Activated T-helper 2 cell treated with anti-CD3 and anti-CD28 coated beads, Interferon-gamma antibody, Interleukin-2, Interleukin-4, amounts not matched to agents 10 μg/mL and 5 μg/mL and 100 μg/mL, durations not matched to agents 14 hours and 24 hours and 36 hours (primary cell): ENCODE measurements at regions of chr17 and their contacts with region 1.

Region 1: DNA sequence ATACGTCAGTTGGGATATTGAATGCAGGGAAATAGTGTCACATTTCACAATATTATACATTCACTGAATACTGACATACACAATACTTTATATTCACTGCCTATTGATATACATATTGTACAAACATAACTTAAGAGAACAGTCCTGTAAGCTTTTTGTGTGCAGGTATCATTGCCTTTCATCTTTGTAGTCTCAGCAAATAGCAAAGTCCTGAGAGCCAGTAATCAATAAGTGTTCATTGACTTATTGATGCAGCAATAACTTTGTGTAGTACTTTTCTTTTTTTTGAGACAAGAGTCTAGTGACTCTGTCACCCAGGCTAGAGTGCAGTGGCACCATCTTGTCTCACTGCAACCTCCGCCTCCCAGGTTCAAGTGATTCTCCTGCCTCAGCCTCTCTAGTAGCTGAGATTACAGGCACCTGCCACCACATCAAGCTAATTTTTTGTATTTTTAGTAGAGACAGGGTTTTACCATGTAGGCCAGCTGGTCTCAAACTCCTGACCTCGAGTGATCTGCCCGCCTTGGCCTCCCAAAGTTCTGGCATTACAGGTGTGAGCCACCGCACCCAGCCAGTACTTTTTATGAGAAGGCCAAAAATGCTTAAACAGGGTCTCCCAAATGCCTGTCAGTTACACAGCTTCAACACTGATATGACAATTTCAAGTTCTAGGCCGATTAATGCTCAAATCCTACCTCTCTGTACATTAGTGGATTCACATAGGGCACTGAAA is 5.4 kb upstream of the NUP85 start:
- DNase-seq: no peak
- H3K4me3 Mint-ChIP-seq: no peak overlapping the region
- H3K27ac Mint-ChIP-seq: no peak overlapping the region
- H3K4me1 Mint-ChIP-seq: peaks cover 5% of the 10 kb centered on the region
- H3K27me3 Mint-ChIP-seq: no peaks in the 10 kb centered on the region

Region 2: GRCh38 chr17:75046582-75047289 is 153.3 kb before region 1 on chr17 and contains the starts of genes ATP5PD and KCTD2:
- intact Hi-C with region 1: loop called (anchors 5 kb)
- DNase-seq: peak; percentile 93
- H3K4me3 Mint-ChIP-seq: peak within 1 kb of the TSS; percentile 98
- H3K27ac Mint-ChIP-seq: peak within 1 kb of the TSS; percentile 86
- H3K4me1 Mint-ChIP-seq: peaks cover 35% of the 10 kb centered on the region
- H3K27me3 Mint-ChIP-seq: no peaks in the 10 kb centered on the region
- total RNA-seq, gene ATP5PD: 166 and 170 TPM in 2 replicates
- total RNA-seq, gene KCTD2: 18.0 and 20.7 TPM in 2 replicates

Region 3: GRCh38 chr17:75154195-75155106 is 45.6 kb before region 1 on chr17 and contains the start of gene JPT1:
- intact Hi-C with region 1: loop called (anchors 5 kb)
- DNase-seq: peak; percentile 96
- H3K4me3 Mint-ChIP-seq: peak within 1 kb of the TSS; percentile 93
- H3K27ac Mint-ChIP-seq: peak within 1 kb of the TSS; percentile 84
- H3K4me1 Mint-ChIP-seq: peaks cover 33% of the 10 kb centered on the region
- H3K27me3 Mint-ChIP-seq: no peaks in the 10 kb centered on the region
- total RNA-seq, gene JPT1: 282 and 290 TPM in 2 replicates

Region 4: GRCh38 chr17:75173526-75173925 is 26.5 kb before region 1 on chr17:
- intact Hi-C with region 1: no loop called
- DNase-seq: no peak
- H3K4me3 Mint-ChIP-seq: no peak overlapping the region
- H3K27ac Mint-ChIP-seq: no peak overlapping the region
- H3K4me1 Mint-ChIP-seq: peaks cover 10% of the 10 kb centered on the region
- H3K27me3 Mint-ChIP-seq: no peaks in the 10 kb centered on the region